ENCODE measurements at regions of chr3 and their contacts with region 1.

Region 1: DNA sequence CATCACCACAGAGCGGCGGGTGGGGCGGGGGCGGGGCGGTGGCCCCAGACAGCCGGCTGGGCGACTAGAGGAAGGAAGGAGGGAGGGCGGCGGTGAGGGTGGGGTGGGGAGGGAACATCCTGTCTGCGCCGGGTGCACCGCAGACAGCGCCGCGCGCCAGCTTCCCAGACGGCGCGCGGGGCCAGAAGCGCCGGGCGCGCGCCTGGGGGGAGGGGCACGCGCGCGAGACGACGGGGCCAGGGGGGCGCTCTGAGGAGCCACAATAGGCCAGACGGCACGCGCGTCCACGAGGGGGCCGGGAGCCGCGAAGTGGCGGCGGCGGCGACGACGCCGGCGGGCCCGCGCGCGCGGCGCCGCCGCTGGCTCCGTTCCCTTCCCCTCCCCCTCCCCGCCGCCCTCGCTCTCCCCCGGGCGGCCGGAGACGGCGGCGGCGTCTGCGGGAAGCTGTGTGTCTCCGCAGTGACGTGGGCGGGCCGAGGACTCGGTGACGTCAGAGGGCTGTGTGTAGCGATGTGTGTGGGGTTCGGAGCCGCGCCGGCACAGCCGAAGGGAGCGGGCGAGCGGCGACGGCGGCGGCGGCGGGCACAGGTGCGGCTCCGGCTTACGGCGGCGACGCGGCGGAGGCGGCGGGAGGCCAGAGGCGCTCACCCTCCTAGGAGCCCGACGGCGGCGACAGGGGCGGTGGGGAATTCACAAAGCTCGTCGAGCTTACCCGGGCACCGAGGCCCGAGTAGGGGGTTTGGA is at the start of gene SKIL:
- DNase-seq: peak; percentile 81
- ATAC-seq: peak; percentile 82
- H3K4me3 ChIP-seq: peak within 1 kb of the TSS; percentile 63 to 71
- H3K27ac ChIP-seq: peak within 1 kb of the TSS; percentile 78
- H3K4me1 ChIP-seq: peaks cover 9 to 20% of the 10 kb centered on the region in 2 experiments
- H3K27me3 ChIP-seq: no peaks in the 10 kb centered on the region
- CTCF ChIP-seq: 0 out of 6 replicates have a peak, but pooled peaks of 1 of the 3 experiments have one; percentile 10
- POLR2A ChIP-seq: no peak
- RAD21 ChIP-seq: no peak
- total RNA-seq, gene SKIL: 15.1 TPM

Region 2: GRCh38 chr3:169772897-169773828 is 584.2 kb before region 1 on chr3 and contains the start of gene MYNN:
- CTCF ChIA-PET with region 1: no interaction called
- POLR2A ChIA-PET with region 1: no interaction called
- RAD21 ChIA-PET with region 1: no interaction called
- intact Hi-C with region 1: loop called (anchors 2 kb)
- DNase-seq: peak; percentile 73
- ATAC-seq: peak; percentile 82
- H3K4me3 ChIP-seq: peak within 1 kb of the TSS; percentile 94 to 99
- H3K27ac ChIP-seq: peak within 1 kb of the TSS; percentile 92
- H3K4me1 ChIP-seq: peaks cover 3 to 15% of the 10 kb centered on the region in 2 experiments; a peak in 1 of 4 replicates
- H3K27me3 ChIP-seq: no peaks in the 10 kb centered on the region
- CTCF ChIP-seq: no peak
- POLR2A ChIP-seq: peak; percentile 65
- RAD21 ChIP-seq: no peak
- total RNA-seq, gene MYNN: 13.5 TPM